ENCODE measurements at regions of chr1 and their contacts with region 1.

Region 1: GRCh38 chr1:209827384-209828262 is at the start of gene UTP25:
- DNase-seq: peak; percentile 84
- H3K4me3 ChIP-seq: peak within 1 kb of the TSS; percentile 81
- CTCF ChIP-seq: peak; percentile 68

Region 2: DNA sequence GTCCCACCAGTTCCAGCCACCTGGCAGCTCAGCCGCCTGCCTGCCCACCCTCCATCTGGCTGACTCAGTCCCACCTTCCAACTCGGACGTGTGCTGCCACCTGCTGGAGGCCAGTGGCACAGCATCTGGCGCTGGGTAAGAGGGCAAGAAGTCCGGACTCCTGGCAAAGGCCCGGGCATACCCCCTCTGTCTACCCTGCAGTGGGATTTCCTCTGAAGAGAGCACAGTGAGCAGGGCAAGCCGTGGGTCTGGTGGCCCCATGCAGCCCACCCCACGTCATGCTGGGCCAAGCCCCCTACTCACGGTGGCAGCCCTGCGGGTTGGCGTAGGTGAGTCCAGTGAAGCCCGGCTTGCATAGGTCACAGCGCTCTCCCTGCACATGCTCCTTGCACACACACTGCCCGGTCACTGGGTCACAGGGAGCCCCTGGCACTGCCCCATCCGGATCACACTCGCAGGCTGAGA is 199.9 kb before region 1 on chr1:
- CTCF ChIA-PET with region 1: no interaction called
- POLR2A ChIA-PET with region 1: no interaction called
- DNase-seq: no peak
- H3K4me3 ChIP-seq: no peak overlapping the region
- CTCF ChIP-seq: peak; percentile 97

Region 3: GRCh38 chr1:209688746-209689234 is 138.8 kb before region 1 on chr1:
- CTCF ChIA-PET with region 1: no interaction called
- POLR2A ChIA-PET with region 1: no interaction called
- DNase-seq: no peak
- H3K4me3 ChIP-seq: no peak overlapping the region
- CTCF ChIP-seq: no peak

Region 4: DNA sequence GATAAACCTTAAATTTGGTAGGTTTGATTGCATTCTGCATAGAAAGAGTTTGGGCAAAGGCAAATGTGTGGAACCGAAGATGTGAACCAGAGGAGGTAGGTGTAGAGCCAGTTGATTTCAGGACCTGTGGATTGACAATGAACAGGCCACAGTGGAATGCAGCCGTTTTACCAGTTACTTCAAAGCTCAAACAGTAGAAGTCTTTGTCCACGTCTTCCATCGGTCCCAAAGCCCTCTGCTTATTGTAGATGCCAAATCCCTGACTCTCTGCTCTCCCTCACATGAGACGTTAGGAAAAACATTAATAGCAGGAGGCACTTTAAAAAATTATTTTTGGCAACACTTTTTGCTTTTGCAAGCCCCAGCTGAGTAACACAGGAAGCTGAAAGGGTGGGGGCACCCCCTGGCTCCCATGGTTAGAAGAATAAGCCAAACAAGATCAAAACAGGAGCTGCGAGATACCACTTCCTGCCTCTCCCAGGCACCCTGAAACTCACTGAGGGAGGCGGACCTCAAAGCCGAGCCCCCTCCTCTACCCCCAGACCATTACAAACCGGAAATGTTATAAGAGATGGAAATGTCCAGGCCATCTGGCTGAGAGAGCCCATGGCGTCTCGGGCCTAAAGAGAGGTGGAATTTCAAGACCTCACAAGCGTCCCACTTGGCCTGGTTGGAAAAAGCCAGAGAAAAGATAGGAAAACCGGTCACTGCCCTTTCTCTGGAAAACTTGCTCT is 58.3 kb before region 1 on chr1:
- CTCF ChIA-PET with region 1: interaction called, 12 read pairs
- POLR2A ChIA-PET with region 1: no interaction called
- DNase-seq: peak; percentile 77
- H3K4me3 ChIP-seq: no peak overlapping the region
- CTCF ChIP-seq: no peak

Region 5: GRCh38 chr1:209805875-209806760 is 21.5 kb before region 1 on chr1 and contains the start of gene IRF6:
- CTCF ChIA-PET with region 1: interaction called, 293 read pairs
- POLR2A ChIA-PET with region 1: no interaction called
- DNase-seq: no peak
- H3K4me3 ChIP-seq: peak within 1 kb of the TSS; percentile 67
- CTCF ChIP-seq: no peak

Region 6: DNA sequence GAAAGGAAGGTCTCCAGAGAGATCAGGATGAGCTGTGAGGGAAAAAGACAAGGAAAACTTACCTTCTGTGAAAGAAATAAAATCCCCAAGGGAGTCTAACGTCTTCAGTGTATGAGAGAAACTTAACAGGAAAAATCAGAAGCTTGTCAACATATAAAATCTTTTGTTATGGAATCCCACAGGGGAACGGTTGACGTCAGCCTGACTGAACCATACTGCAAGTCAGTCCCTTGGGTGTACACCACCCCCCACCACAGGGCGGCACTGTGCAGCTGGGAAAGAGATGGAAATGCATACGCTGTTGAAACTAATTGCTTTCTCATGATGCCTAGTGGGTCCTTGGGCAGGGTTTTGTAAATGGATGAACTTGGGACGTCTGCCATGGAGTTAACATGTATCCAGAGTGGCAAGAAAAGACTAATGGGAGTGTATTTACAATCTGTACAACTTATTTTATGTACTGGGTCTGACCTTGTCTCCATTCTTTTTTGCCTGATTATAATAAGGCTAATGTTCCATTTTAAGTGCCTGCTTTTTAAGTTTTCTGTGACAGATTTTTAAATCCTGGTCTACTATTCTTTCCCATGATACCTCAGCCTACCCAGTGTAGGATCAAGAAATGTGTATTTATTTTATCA is 22.8 kb after region 1 on chr1:
- CTCF ChIA-PET with region 1: interaction called, 86 read pairs
- POLR2A ChIA-PET with region 1: no interaction called
- DNase-seq: peak; percentile 77
- H3K4me3 ChIP-seq: no peak overlapping the region
- CTCF ChIP-seq: peak; percentile 86

Region 7: GRCh38 chr1:209875515-209875914 is 47.9 kb after region 1 on chr1:
- CTCF ChIA-PET with region 1: interaction called, 15 read pairs
- POLR2A ChIA-PET with region 1: no interaction called
- DNase-seq: peak; percentile 36
- H3K4me3 ChIP-seq: peak overlapping the region; percentile 19; the same call in 1 of the 2 replicates
- CTCF ChIP-seq: peak; percentile 78

Region 8: DNA sequence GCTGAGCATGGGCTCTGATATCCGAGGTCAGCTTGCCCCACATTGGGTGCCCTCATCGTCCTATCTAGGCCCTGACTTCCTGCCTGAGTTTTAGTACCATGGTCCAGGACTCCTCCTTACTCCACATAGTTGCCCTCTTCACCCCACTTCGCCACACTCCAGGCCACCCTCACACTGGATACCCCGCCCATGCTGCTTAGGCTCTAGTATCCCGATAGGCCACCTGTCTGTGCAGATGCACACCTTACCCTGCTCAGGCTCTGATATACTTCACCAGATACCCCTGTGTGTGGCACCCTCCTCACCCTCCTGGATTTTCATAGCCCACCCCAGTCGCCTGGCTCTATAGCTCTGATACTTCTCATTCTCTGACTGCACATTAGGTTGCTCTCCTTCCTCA is 259.4 kb after region 1 on chr1:
- CTCF ChIA-PET with region 1: no interaction called
- POLR2A ChIA-PET with region 1: no interaction called
- DNase-seq: no peak
- H3K4me3 ChIP-seq: no peak overlapping the region
- CTCF ChIP-seq: no peak

Measured in AG04449 (cell line).